ENCODE measurements at regions of chr11 and their contacts with region 1.

Region 1: GRCh38 chr11:106021967-106022794 is at the start of gene MSANTD4:
- DNase-seq: peak; percentile 98 to 99 (median 98)
- H3K4me3 ChIP-seq: peak within 1 kb of the TSS; percentile 76 to 95 (median 83)
- H3K4me3 Mint-ChIP-seq: peak within 1 kb of the TSS; percentile 93 to 96
- H3K27ac ChIP-seq: peak within 1 kb of the TSS; percentile 77 to 80
- H3K27ac Mint-ChIP-seq: peak within 1 kb of the TSS; percentile 87 to 95 (median 93)
- H3K4me1 ChIP-seq: peaks cover 14 to 22% of the 10 kb centered on the region in 2 donors
- H3K4me1 Mint-ChIP-seq: peaks cover 31% of the 10 kb centered on the region
- H3K27me3 ChIP-seq: no peaks in the 10 kb centered on the region
- H3K27me3 Mint-ChIP-seq: peaks cover 0 to 6% (median 2%) of the 10 kb centered on the region in 3 donors
- CTCF ChIP-seq: no peak
- polyA plus RNA-seq, gene MSANTD4: 1.8 to 2.5 (median 2.1) TPM

Region 2: GRCh38 chr11:106076919-106077608 is 54.9 kb after region 1 on chr11 and contains the start of gene KBTBD3:
- intact Hi-C with region 1: loop called (anchors 5 kb)
- DNase-seq: peak; percentile 98 to 100 (median 98)
- H3K4me3 ChIP-seq: peak within 1 kb of the TSS; percentile 87 to 88 (median 88)
- H3K4me3 Mint-ChIP-seq: peak within 1 kb of the TSS; percentile 96 to 99
- H3K27ac ChIP-seq: peak within 1 kb of the TSS; percentile 96 to 98
- H3K27ac Mint-ChIP-seq: peak within 1 kb of the TSS; percentile 96 to 99 (median 99)
- H3K4me1 ChIP-seq: peaks cover 16 to 29% of the 10 kb centered on the region in 2 donors
- H3K4me1 Mint-ChIP-seq: peaks cover 33% of the 10 kb centered on the region
- H3K27me3 ChIP-seq: no peaks in the 10 kb centered on the region
- H3K27me3 Mint-ChIP-seq: no peaks in the 10 kb centered on the region
- CTCF ChIP-seq: peak; percentile 32
- polyA plus RNA-seq, gene KBTBD3: 1.5 to 5.9 (median 2.6) TPM